ENCODE measurements at regions of chr19 and their contacts with region 1.

Region 1: DNA sequence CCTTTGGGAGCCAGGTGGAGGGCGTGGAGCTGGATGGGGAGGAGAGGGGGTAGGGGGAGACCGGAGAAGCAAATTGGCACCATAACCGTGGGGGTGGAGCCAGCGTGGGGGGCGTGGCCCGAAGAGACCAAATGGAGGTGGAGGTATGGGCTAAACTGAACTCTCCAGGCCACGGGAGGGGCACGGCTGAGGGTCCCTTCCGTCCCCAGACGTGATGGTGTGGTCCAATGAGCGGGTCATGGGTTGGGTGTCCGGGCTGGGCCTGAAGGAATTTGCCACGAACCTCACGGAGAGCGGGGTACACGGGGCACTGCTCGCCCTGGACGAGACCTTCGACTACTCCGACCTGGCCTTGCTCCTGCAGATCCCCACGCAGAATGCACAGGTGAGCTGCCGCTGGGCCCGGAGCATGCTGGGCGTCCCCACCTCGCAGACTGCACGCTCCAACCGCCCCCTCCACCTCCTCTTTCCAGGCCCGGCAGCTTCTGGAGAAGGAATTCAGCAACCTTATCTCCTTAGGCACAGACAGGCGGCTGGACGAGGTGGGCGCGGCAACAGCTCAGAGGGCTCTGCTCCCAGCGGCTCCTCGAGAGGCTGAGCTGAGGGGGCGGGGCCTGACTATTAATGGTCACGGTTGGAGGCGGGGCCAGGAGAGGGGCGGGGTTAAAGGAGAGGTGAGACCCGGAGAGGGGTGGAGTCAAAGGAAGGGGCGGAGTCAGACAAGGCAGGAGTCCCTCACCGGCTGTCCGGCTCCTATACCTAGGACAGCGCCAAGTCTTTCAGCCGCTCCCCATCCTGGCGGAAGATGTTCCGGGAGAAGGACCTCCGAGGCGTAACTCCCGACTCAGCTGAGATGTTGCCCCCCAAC is 6.2 kb downstream of the HRC start:
- DNase-seq: peak; percentile 99 to 100
- H3K4me3 ChIP-seq: peak overlapping the region; percentile 27 to 60 (median 49)
- H3K27ac ChIP-seq: peak overlapping the region; percentile 51 to 84 (median 83)
- H3K4me1 ChIP-seq: peaks cover 23 to 36% of the 10 kb centered on the region in 2 donors
- H3K27me3 ChIP-seq: no peaks in the 10 kb centered on the region
- CTCF ChIP-seq: no peak
- POLR2A ChIP-seq: peak in 1 of 2 donors; percentile 81

Region 2: GRCh38 chr19:49097455-49098288 is 51.3 kb before region 1 on chr19:
- intact Hi-C with region 1: loop called (anchors 5 kb)
- DNase-seq: peak; percentile 66 to 72
- H3K4me3 ChIP-seq: no peak overlapping the region
- H3K27ac ChIP-seq: peak overlapping the region in 1 of 3 donors; percentile 13
- H3K4me1 ChIP-seq: peaks cover 8 to 22% of the 10 kb centered on the region in 2 donors
- H3K27me3 ChIP-seq: no peaks in the 10 kb centered on the region
- CTCF ChIP-seq: peak in 5 of 6 experiments; percentile 97 to 98 (median 97)
- POLR2A ChIP-seq: no peak

Region 3: GRCh38 chr19:49118565-49119410 is 30.2 kb before region 1 on chr19 and contains the start of gene C19orf73:
- intact Hi-C with region 1: loop called (anchors 5 kb)
- DNase-seq: peak; percentile 94
- H3K4me3 ChIP-seq: peak within 1 kb of the TSS; percentile 20 to 49 (median 21)
- H3K27ac ChIP-seq: peak within 1 kb of the TSS; percentile 93 to 98 (median 95)
- H3K4me1 ChIP-seq: peaks cover 21 to 25% of the 10 kb centered on the region in 2 donors
- H3K27me3 ChIP-seq: no peaks in the 10 kb centered on the region
- CTCF ChIP-seq: peak in 2 of 6 experiments; percentile 15 to 34
- POLR2A ChIP-seq: peak in 1 of 2 donors; percentile 77
- total RNA-seq, gene C19orf73: 1.7 to 13.4 (median 6.1) TPM

Region 4: DNA sequence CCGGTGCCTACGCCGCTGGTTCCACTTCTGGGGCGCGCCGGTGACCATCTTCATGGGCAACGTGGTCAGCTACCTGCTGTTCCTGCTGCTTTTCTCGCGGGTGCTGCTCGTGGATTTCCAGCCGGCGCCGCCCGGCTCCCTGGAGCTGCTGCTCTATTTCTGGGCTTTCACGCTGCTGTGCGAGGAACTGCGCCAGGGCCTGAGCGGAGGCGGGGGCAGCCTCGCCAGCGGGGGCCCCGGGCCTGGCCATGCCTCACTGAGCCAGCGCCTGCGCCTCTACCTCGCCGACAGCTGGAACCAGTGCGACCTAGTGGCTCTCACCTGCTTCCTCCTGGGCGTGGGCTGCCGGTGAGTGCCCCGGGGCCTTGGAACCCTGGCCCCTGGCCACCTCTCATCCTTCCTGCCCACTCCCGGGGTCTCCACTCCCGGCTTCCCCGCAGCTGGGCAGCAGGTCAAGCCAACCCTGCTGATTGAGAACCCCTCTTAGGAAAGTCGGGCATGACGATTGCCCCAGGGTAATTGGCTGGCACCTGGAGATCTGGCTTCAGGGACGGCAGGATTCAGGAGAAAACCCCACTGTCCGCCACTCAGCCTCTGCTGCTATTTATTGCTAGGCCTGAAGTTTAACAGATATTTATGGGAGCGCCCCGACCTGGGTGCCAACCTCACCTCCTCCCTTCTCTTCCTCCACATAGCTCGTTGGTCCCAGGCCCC is 47.7 kb after region 1 on chr19:
- intact Hi-C with region 1: loop called (anchors 5 kb)
- DNase-seq: peak; percentile 89 to 90
- H3K4me3 ChIP-seq: peak overlapping the region in 1 of 3 donors; percentile 24
- H3K27ac ChIP-seq: peak overlapping the region in 2 of 3 donors; percentile 73 to 81
- H3K4me1 ChIP-seq: peaks cover 6 to 9% of the 10 kb centered on the region in 2 donors
- H3K27me3 ChIP-seq: no peaks in the 10 kb centered on the region
- CTCF ChIP-seq: peak in 1 of 6 experiments; percentile 37
- POLR2A ChIP-seq: peak in 1 of 2 donors; percentile 37